ENCODE measurements at regions of chr12 and their contacts with region 1.

Region 1: DNA sequence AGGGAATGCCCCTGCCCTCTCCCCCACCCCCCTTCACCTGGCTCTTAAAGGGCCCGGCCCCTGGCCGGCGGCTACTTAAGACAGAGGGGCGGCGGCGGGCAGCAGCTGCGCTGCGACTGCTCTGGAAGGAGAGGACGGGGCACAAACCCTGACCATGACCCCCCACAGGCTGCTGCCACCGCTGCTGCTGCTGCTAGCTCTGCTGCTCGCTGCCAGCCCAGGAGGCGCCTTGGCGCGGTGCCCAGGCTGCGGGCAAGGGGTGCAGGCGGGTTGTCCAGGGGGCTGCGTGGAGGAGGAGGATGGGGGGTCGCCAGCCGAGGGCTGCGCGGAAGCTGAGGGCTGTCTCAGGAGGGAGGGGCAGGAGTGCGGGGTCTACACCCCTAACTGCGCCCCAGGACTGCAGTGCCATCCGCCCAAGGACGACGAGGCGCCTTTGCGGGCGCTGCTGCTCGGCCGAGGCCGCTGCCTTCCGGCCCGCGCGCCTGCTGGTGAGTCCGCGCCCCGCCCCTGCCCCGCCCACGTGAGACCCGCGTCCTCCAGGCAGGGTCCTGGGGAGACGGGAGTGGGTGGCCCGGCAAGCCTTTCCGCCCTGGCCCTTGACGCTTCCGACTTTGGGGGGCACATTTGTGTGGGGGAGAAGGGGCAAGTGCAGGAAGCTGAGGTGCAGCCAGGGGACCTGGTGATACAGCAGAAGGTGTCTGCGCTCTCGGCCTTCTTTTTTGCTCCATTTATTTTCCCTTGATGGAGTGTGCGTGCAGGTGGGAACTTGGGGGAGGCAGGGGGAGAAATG is at the start of gene IGFBP6:
- DNase-seq: peak; percentile 67
- H3K4me3 ChIP-seq: peak within 1 kb of the TSS; percentile 64 to 65
- H3K27ac ChIP-seq: peak within 1 kb of the TSS; percentile 45 to 87
- H3K4me1 ChIP-seq: peaks cover 12% of the 10 kb centered on the region
- H3K27me3 ChIP-seq: no peaks in the 10 kb centered on the region
- CTCF ChIP-seq: peak in 1 of 3 experiments; percentile 38
- POLR2A ChIP-seq: no peak
- total RNA-seq, gene IGFBP6: 121 to 261 TPM

Region 2: GRCh38 chr12:53071591-53072551 is 25.9 kb before region 1 on chr12:
- intact Hi-C with region 1: loop called (anchors 2 kb)
- DNase-seq: peak; percentile 89
- H3K4me3 ChIP-seq: no peak overlapping the region
- H3K27ac ChIP-seq: peak overlapping the region; percentile 56 to 86
- H3K4me1 ChIP-seq: peaks cover 57% of the 10 kb centered on the region
- H3K27me3 ChIP-seq: no peaks in the 10 kb centered on the region
- CTCF ChIP-seq: peak in 1 of 3 experiments; percentile 17
- POLR2A ChIP-seq: no peak

Measured in testis (tissue), 5 donors.